Activated T-helper 1 cell treated with anti-CD3 and anti-CD28 coated beads, Interleukin-12 subunit alpha, Interleukin-12 subunit beta, Interleukin-2, Interleukin-4 antibody, amounts not matched to agents 30 ng/mL and 10 ng/mL and 1 ng/mL, durations not matched to agents 14 hours and 24 hours and 36 hours (primary cell): ENCODE measurements at regions of chrX and their contacts with region 1.

Region 1: GRCh38 chrX:110133735-110134370 is 130.9 kb downstream of the TMEM164 start:
- DNase-seq: no peak
- H3K4me3 Mint-ChIP-seq: no peak overlapping the region
- H3K27ac Mint-ChIP-seq: peak overlapping the region; percentile 71
- H3K4me1 Mint-ChIP-seq: peaks cover 18% of the 10 kb centered on the region
- H3K27me3 Mint-ChIP-seq: no peaks in the 10 kb centered on the region

Region 2: GRCh38 chrX:110002300-110003166 is 131.3 kb before region 1 on chrX and contains the start of gene TMEM164:
- intact Hi-C with region 1: loop called (anchors 2 kb)
- DNase-seq: peak; percentile 72
- H3K4me3 Mint-ChIP-seq: peak within 1 kb of the TSS; percentile 92
- H3K27ac Mint-ChIP-seq: peak within 1 kb of the TSS; percentile 92
- H3K4me1 Mint-ChIP-seq: peaks cover 23% of the 10 kb centered on the region
- H3K27me3 Mint-ChIP-seq: no peaks in the 10 kb centered on the region
- total RNA-seq, gene TMEM164: 17.9 and 19.1 TPM in 2 replicates